Ovary (tissue), 10 donors: ENCODE measurements at regions of chr10 and their contacts with region 1.

Region 1: GRCh38 chr10:110007701-110008517 is at the start of gene ADD3:
- DNase-seq: peak; percentile 98 to 99 (median 99)
- H3K4me3 ChIP-seq: peak within 1 kb of the TSS; percentile 100
- H3K27ac ChIP-seq: peak within 1 kb of the TSS; percentile 79 to 93
- H3K4me1 ChIP-seq: peaks cover 2% of the 10 kb centered on the region
- H3K27me3 ChIP-seq: no peaks in the 10 kb centered on the region
- CTCF ChIP-seq: no peak
- EP300 ChIP-seq: no peak
- POLR2A ChIP-seq: peak; percentile 31
- total RNA-seq, gene ADD3: 65.3 to 110 (median 85.5) TPM

Region 2: GRCh38 chr10:109894516-109894915 is 113.4 kb before region 1 on chr10:
- intact Hi-C with region 1: loop called in 3 of 4 experiments (anchors 10 kb)
- DNase-seq: peak; percentile 68 to 80 (median 74)
- H3K4me3 ChIP-seq: no peak overlapping the region
- H3K27ac ChIP-seq: peak overlapping the region; percentile 25 to 59
- H3K4me1 ChIP-seq: peaks cover 26% of the 10 kb centered on the region
- H3K27me3 ChIP-seq: no peaks in the 10 kb centered on the region
- CTCF ChIP-seq: no peak
- EP300 ChIP-seq: no peak
- POLR2A ChIP-seq: no peak

Region 3: DNA sequence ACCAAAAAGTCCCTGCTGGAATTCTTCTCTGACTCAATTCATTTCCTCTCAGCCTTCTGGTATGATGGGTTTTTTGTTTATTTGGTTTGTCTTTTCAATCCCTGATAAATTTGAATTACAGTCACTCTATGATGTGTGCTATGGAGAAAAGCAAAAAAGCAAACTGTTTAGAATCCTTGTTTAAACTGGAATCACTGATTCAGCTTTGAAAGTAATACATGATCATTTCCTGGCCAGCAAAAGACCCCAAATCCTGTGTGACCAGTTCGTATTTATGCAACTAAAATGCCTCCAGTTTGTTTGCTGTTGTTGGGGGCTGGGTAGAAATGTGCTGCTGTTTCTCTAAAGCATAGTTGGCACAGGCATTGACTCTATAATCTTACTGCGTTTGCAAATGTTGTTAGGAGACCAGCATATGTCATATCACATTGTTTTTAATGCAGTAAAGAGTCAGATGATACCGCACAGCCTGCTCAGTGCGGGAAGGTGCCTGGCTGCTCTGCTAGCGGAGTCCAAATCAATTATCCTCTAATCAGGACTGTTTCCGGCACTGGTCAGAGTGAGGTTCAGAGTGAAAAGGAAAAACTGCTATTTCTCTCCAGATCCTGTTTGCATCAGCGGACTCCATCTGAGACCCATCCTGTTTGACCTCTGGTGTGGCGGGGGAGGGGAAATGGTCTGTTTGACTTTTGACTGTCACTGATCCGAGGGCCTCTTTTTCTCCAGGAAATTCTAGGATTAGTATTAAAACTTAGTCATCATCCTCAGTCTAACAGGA is 40.8 kb before region 1 on chr10:
- intact Hi-C with region 1: loop called in 1 of 4 experiments (anchors 5 kb)
- DNase-seq: peak in 1 of 5 donors; percentile 35
- H3K4me3 ChIP-seq: no peak overlapping the region
- H3K27ac ChIP-seq: no peak overlapping the region
- H3K4me1 ChIP-seq: peaks cover 10% of the 10 kb centered on the region
- H3K27me3 ChIP-seq: no peaks in the 10 kb centered on the region
- CTCF ChIP-seq: no peak
- EP300 ChIP-seq: no peak
- POLR2A ChIP-seq: no peak

Region 4: GRCh38 chr10:110444004-110444337 is 436.1 kb after region 1 on chr10:
- intact Hi-C with region 1: no loop called
- DNase-seq: no peak
- H3K4me3 ChIP-seq: no peak overlapping the region
- H3K27ac ChIP-seq: no peak overlapping the region
- H3K4me1 ChIP-seq: no peaks in the 10 kb centered on the region
- H3K27me3 ChIP-seq: no peaks in the 10 kb centered on the region
- CTCF ChIP-seq: no peak
- EP300 ChIP-seq: no peak
- POLR2A ChIP-seq: no peak